Activated CD4-positive, alpha-beta T cell treated with anti-CD3 and anti-CD28 coated beads for 36 hours (primary cell): ENCODE measurements at regions of chr3 and their contacts with region 1.

Region 1: GRCh38 chr3:108100906-108101660 is 10.3 kb upstream of the CD47 start:
- DNase-seq: peak; percentile 59
- ATAC-seq: peak; percentile 89
- H3K4me3 Mint-ChIP-seq: no peak overlapping the region
- H3K27ac Mint-ChIP-seq: peak overlapping the region; percentile 55
- H3K4me1 Mint-ChIP-seq: peaks cover 48% of the 10 kb centered on the region
- H3K27me3 Mint-ChIP-seq: no peaks in the 10 kb centered on the region

Region 2: DNA sequence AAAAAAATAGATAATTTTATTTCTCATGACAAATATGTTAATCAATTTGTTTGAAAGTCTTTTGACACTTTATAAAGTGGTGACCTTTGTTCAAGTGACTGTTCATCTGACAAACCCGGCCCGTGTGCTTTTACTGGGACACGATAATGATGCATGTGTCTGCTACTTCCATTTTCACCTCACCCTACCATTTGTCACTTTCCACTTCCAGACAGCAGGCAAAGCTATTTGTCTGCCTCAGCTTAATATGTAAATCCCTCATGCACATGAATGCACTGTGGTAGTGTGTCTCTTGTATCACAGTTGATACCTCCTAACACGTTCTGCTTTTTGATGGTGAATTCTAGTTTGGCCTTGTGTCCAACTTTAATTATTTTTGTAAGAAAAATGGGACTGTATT is 374.0 kb before region 1 on chr3:
- CTCF ChIA-PET with region 1: no interaction called
- POLR2A ChIA-PET with region 1: no interaction called
- intact Hi-C with region 1: no loop called
- DNase-seq: no peak
- ATAC-seq: no peak
- H3K4me3 Mint-ChIP-seq: no peak overlapping the region
- H3K27ac Mint-ChIP-seq: no peak overlapping the region
- H3K4me1 Mint-ChIP-seq: peaks cover 21% of the 10 kb centered on the region
- H3K27me3 Mint-ChIP-seq: no peaks in the 10 kb centered on the region

Region 3: GRCh38 chr3:108117241-108117775 is 16.2 kb after region 1 on chr3:
- CTCF ChIA-PET with region 1: interaction called, 10 read pairs
- POLR2A ChIA-PET with region 1: interaction called, 4 read pairs
- intact Hi-C with region 1: loop called in 1 of 2 experiments (anchors 2 kb)
- DNase-seq: peak; percentile 28
- ATAC-seq: peak; percentile 53
- H3K4me3 Mint-ChIP-seq: no peak overlapping the region
- H3K27ac Mint-ChIP-seq: peak overlapping the region; percentile 66
- H3K4me1 Mint-ChIP-seq: peaks cover 42% of the 10 kb centered on the region
- H3K27me3 Mint-ChIP-seq: no peaks in the 10 kb centered on the region

Region 4: DNA sequence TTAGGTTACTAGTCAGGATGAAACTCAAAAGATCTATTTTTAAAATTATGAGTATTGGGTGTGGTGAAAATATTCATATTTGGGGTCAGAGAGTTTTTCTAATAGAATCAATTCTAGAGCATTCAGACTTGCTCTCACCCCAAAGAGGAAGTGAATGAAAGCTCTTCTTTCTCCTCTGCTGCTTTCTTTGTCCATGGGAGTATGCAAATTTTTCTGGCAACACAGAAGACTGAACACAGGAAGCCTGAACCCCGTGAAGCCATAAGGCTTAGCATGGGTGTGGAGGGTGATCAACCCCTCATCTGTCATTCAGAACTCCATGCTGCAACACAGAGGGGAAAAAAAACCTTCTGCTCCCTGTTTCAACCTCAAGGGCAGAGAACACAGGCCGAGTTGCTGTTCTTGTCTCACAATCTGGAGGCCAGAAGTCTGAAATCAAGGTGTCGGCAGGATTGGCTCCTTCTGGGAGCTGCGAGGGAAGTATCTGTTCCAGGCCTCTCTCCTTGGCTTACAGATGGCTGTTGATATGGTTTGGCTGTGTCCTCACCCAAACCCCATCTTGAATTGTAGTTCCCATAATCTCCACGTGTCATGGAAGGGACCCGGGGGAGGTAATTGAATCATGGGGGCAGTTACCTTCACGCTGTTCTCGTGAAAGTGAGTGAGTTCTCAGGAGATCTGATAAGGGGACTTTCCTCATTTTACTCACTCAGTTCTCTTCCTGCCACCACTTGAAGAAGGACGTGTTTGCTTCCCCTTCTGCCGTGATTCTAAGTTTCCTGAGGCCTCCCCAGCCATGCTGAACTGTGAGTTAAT is 23.5 kb after region 1 on chr3:
- CTCF ChIA-PET with region 1: interaction called, 7 read pairs
- POLR2A ChIA-PET with region 1: interaction called, 6 read pairs
- intact Hi-C with region 1: loop called in 1 of 2 experiments (anchors 1 kb)
- DNase-seq: peak; percentile 82
- ATAC-seq: peak; percentile 70
- H3K4me3 Mint-ChIP-seq: peak overlapping the region; percentile 93
- H3K27ac Mint-ChIP-seq: peak overlapping the region; percentile 96
- H3K4me1 Mint-ChIP-seq: peaks cover 62% of the 10 kb centered on the region
- H3K27me3 Mint-ChIP-seq: no peaks in the 10 kb centered on the region